ENCODE measurements at regions of chr1 and their contacts with region 1.

Region 1: GRCh38 chr1:205961405-205961804 is 18.1 kb upstream of the SLC26A9 start:
- DNase-seq: peak in 1 of 5 donors; percentile 30
- ATAC-seq: peak in 3 of 4 donors; percentile 27 to 69 (median 33)
- H3K4me3 ChIP-seq: no peak overlapping the region
- H3K27ac ChIP-seq: peak overlapping the region in 1 of 12 donors; percentile 25
- H3K4me1 ChIP-seq: peaks cover 0 to 27% (median 16%) of the 10 kb centered on the region in 12 donors
- H3K27me3 ChIP-seq: no peaks in the 10 kb centered on the region
- CTCF ChIP-seq: no peak
- POLR2A ChIP-seq: no peak

Region 2: GRCh38 chr1:205925730-205926129 is 35.7 kb before region 1 on chr1:
- intact Hi-C with region 1: loop called in 2 of 10 experiments (anchors 5 kb)
- DNase-seq: no peak
- ATAC-seq: no peak
- H3K4me3 ChIP-seq: no peak overlapping the region
- H3K27ac ChIP-seq: no peak overlapping the region
- H3K4me1 ChIP-seq: peaks cover 0 to 7% (median 2%) of the 10 kb centered on the region in 12 donors
- H3K27me3 ChIP-seq: no peaks in the 10 kb centered on the region
- CTCF ChIP-seq: no peak
- POLR2A ChIP-seq: no peak